ENCODE measurements at regions of chr12 and their contacts with region 1.

Region 1: GRCh38 chr12:26513363-26514043 is 318.1 kb downstream of the SSPN start:
- DNase-seq: no peak
- H3K4me3 ChIP-seq: no peak overlapping the region
- H3K27ac ChIP-seq: no peak overlapping the region
- H3K4me1 ChIP-seq: peaks cover 22% of the 10 kb centered on the region
- H3K27me3 ChIP-seq: no peaks in the 10 kb centered on the region
- CTCF ChIP-seq: no peak

Region 2: DNA sequence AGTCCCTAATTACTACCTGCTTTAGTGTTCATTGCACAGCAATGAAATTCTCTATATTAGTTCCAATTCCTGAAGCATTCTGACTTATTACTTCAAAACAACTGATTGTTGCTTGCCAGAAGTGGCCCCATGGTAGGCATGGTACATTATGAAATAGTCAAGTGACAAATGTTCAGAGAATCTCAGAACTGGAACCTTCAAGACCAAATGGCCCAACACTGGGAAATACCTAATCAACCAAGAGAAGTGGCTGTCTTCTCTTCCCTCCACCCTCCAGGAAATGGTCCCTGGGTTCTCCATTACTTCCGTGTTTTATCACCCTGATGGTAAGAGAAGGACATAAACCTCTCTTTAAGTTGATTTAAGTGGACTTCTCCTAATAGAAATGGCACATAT is 269.6 kb after region 1 on chr12:
- CTCF ChIA-PET with region 1: no interaction called
- POLR2A ChIA-PET with region 1: interaction called, 10 read pairs
- intact Hi-C with region 1: no loop called
- DNase-seq: no peak
- H3K4me3 ChIP-seq: no peak overlapping the region
- H3K27ac ChIP-seq: no peak overlapping the region
- H3K4me1 ChIP-seq: no peaks in the 10 kb centered on the region
- H3K27me3 ChIP-seq: no peaks in the 10 kb centered on the region
- CTCF ChIP-seq: no peak

Measured in A673 (cell line).